OCI-LY7 (cell line): ENCODE measurements at regions of chr6 and their contacts with region 1.

Region 1: GRCh38 chr6:26285143-26286134 is 79.6 kb upstream of the BTN3A2 start:
- DNase-seq: peak; percentile 99
- H3K4me3 ChIP-seq: peak overlapping the region; percentile 80
- H3K27ac ChIP-seq: peak overlapping the region; percentile 96
- H3K4me1 ChIP-seq: peaks cover 32% of the 10 kb centered on the region
- CTCF ChIP-seq: 0 out of 2 replicates have a peak, but pooled peaks have one; percentile 0

Region 2: DNA sequence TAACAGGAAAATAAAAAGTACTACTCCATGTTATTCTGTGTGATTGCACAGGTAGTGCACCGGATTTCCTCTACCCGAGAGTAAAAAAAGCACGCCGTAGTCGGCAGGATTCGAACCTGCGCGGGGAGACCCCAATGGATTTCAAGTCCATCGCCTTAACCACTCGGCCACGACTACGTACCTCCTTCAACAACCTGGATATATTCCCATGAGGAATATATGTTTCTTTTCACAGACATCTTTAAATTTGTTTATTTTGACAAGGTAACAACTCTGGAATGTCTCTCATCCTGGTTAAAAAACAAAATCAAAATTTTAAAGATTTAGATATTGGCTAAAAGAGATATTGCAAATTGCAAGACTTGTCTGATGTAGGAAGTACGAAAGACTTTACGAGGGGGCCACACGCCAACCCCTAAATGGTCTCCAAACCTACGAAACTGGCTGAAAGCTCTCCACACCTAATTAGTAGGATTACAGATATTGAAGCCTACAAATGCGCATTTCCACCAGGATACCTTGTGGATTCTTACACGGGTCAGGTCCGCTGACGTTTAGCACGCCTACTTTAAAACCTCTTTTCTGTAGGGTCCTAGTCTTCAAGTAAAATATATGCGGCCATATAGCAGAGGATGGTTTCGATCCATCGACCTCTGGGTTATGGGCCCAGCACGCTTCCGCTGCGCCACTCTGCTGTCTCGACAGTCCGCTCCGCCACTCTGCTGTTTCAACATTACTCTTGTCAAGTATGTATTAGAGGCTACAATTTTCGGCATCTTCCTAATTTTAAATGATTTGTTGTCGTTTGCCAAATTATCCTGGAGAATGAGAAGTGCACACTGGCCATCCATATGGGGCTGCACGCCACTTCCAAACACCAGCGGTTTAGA is 27.3 kb after region 1 on chr6:
- CTCF ChIA-PET with region 1: no interaction called
- POLR2A ChIA-PET with region 1: interaction called, 9 read pairs
- intact Hi-C with region 1: loop called (anchors 1 kb)
- DNase-seq: peak; percentile 80
- H3K4me3 ChIP-seq: peak overlapping the region; percentile 71
- H3K27ac ChIP-seq: peak overlapping the region; percentile 43
- H3K4me1 ChIP-seq: peaks cover 28% of the 10 kb centered on the region
- CTCF ChIP-seq: no peak

Region 3: GRCh38 chr6:26327450-26328264 is 42.2 kb after region 1 on chr6:
- CTCF ChIA-PET with region 1: no interaction called
- POLR2A ChIA-PET with region 1: interaction called, 6 read pairs
- intact Hi-C with region 1: loop called (anchors 2 kb)
- DNase-seq: peak; percentile 68
- H3K4me3 ChIP-seq: peak overlapping the region; percentile 66
- H3K27ac ChIP-seq: no peak overlapping the region
- H3K4me1 ChIP-seq: peaks cover 44% of the 10 kb centered on the region
- CTCF ChIP-seq: no peak

Region 4: DNA sequence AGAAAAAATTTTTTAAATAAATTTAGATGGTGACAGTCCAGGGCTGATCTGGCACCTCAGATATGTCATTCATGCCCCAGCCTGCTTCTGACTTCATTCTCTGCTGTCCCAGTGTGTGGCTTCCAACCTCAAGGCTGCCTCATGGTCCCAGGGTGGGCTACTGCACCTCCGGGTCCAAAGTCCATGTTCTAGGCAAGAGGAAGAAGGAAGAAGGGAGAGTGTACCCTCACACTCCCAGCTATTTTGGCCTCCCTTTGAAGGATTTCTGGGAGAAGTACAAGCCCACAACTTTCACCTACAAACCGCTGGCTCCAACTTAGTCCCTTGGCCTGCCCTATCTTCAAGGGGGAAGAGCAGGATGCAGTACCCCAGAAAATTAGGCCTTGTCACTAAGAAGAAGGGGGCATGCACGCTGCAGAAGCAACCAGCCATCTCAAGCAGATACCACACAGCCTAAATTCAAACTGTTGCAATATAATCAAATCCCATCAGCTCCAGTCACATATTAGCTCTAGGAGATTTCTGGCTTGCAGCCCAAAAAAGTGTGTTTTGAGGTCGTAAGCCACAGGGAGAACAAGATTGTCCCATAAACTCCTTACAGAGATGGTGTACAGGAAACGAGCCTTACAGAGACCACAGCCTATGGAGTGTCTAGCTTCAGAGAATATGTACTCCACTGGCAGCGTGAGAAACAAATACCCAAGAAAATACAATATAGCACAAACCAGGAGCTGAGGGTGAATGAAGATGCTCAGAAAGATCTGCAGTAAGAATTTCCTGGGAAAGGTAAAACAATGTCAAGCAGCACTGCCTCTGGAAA is 78.7 kb after region 1 on chr6:
- CTCF ChIA-PET with region 1: no interaction called
- POLR2A ChIA-PET with region 1: interaction called, 9 read pairs
- intact Hi-C with region 1: loop called (anchors 1 kb)
- DNase-seq: peak; percentile 52
- H3K4me3 ChIP-seq: peak overlapping the region; percentile 77
- H3K27ac ChIP-seq: peak overlapping the region; percentile 96
- H3K4me1 ChIP-seq: peaks cover 70% of the 10 kb centered on the region
- CTCF ChIP-seq: no peak

Region 5: GRCh38 chr6:27532820-27533538 is 1247.5 kb after region 1 on chr6:
- CTCF ChIA-PET with region 1: no interaction called
- POLR2A ChIA-PET with region 1: no interaction called
- intact Hi-C with region 1: no loop called
- DNase-seq: no peak
- H3K4me3 ChIP-seq: no peak overlapping the region
- H3K27ac ChIP-seq: no peak overlapping the region
- H3K4me1 ChIP-seq: no peaks in the 10 kb centered on the region
- CTCF ChIP-seq: no peak